Naive thymus-derived CD4-positive, alpha-beta T cell (primary cell): ENCODE measurements at regions of chr4 and their contacts with region 1.

Region 1: GRCh38 chr4:6250235-6250983 is 19.2 kb upstream of the WFS1 start:
- DNase-seq: peak in 7 of 9 donors; percentile 39 to 71 (median 60)
- ATAC-seq: peak; percentile 72
- H3K4me3 ChIP-seq: no peak overlapping the region
- H3K4me3 Mint-ChIP-seq: no peak overlapping the region
- H3K27ac ChIP-seq: no peak overlapping the region
- H3K27ac Mint-ChIP-seq: no peak overlapping the region
- H3K4me1 ChIP-seq: no peaks in the 10 kb centered on the region
- H3K4me1 Mint-ChIP-seq: peaks cover 0 to 6% (median 0%) of the 10 kb centered on the region in 7 donors
- H3K27me3 ChIP-seq: no peaks in the 10 kb centered on the region
- H3K27me3 Mint-ChIP-seq: peaks cover 38 to 52% (median 49%) of the 10 kb centered on the region in 5 donors

Region 2: GRCh38 chr4:5998333-5998936 is 252.0 kb before region 1 on chr4:
- CTCF ChIA-PET with region 1: no interaction called
- POLR2A ChIA-PET with region 1: no interaction called
- intact Hi-C with region 1: loop called in 1 of 2 experiments (anchors 5 kb)
- DNase-seq: peak in 6 of 9 donors; percentile 4 to 51 (median 11)
- ATAC-seq: peak; percentile 60
- H3K4me3 ChIP-seq: no peak overlapping the region
- H3K4me3 Mint-ChIP-seq: no peak overlapping the region
- H3K27ac ChIP-seq: no peak overlapping the region
- H3K27ac Mint-ChIP-seq: no peak overlapping the region
- H3K4me1 ChIP-seq: no peaks in the 10 kb centered on the region
- H3K4me1 Mint-ChIP-seq: peaks cover 0 to 3% (median 0%) of the 10 kb centered on the region in 7 donors
- H3K27me3 ChIP-seq: no peaks in the 10 kb centered on the region
- H3K27me3 Mint-ChIP-seq: peaks cover 0 to 35% (median 11%) of the 10 kb centered on the region in 5 donors

Region 3: DNA sequence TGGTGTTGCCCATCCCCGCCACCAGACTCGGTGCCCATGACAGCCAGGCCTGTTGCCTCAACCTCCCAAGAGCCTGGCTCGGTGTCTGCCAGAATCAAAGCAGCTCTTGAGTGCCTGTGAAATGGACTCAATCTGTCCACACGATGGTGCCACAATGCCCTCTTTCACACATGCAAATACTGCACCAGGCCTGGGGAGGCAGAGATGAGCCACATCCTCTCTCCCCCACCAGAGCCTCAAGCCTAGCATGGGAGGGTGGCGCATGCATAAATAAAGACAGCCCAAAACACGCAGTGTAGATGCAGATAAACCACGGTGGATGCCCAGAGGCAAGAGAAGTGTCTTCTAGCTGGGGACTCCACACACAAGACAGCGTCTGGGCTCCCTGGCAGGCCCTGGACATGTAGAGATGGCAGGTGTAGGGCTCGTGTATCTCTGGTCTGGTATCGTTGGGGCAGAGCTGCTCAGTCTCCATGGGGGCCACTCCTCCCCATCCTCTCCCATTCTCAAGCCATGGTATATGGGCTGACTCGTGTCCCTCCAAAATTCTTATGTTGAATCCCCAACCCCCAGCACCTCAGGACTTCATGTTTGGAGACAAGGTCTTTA is 115.7 kb before region 1 on chr4:
- CTCF ChIA-PET with region 1: no interaction called
- POLR2A ChIA-PET with region 1: no interaction called
- intact Hi-C with region 1: loop called in 1 of 2 experiments (anchors 2 kb)
- DNase-seq: peak in 1 of 9 donors; percentile 11
- ATAC-seq: peak; percentile 86
- H3K4me3 ChIP-seq: no peak overlapping the region
- H3K4me3 Mint-ChIP-seq: no peak overlapping the region
- H3K27ac ChIP-seq: no peak overlapping the region
- H3K27ac Mint-ChIP-seq: no peak overlapping the region
- H3K4me1 ChIP-seq: peaks cover 0 to 5% of the 10 kb centered on the region in 2 donors
- H3K4me1 Mint-ChIP-seq: peaks cover 0 to 11% (median 0%) of the 10 kb centered on the region in 7 donors
- H3K27me3 ChIP-seq: no peaks in the 10 kb centered on the region
- H3K27me3 Mint-ChIP-seq: peaks cover 0 to 9% (median 7%) of the 10 kb centered on the region in 5 donors

Region 4: DNA sequence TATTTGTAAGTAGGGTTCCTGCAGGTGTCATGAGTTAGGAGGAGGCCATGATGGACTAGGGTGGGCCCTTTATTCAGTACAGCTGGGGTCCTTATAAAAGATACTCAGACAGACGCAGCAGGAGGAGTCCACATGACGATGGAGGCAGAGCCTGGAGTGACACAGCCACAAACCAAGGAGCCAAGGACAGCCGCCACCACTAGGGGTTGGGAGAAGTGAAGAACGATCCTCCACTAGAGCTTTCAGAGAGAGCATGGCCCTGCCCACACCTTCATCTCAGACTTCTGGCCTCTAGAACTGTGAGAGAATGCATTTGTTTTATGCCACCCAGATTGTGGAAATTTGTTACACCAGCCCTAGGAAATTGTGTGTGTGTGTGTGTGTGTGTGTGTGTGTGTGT is 81.2 kb before region 1 on chr4:
- CTCF ChIA-PET with region 1: no interaction called
- POLR2A ChIA-PET with region 1: no interaction called
- intact Hi-C with region 1: no loop called
- DNase-seq: no peak
- ATAC-seq: no peak
- H3K4me3 ChIP-seq: no peak overlapping the region
- H3K4me3 Mint-ChIP-seq: no peak overlapping the region
- H3K27ac ChIP-seq: no peak overlapping the region
- H3K27ac Mint-ChIP-seq: no peak overlapping the region
- H3K4me1 ChIP-seq: peaks cover 0 to 14% of the 10 kb centered on the region in 2 donors
- H3K4me1 Mint-ChIP-seq: peaks cover 0 to 49% (median 0%) of the 10 kb centered on the region in 7 donors
- H3K27me3 ChIP-seq: no peaks in the 10 kb centered on the region
- H3K27me3 Mint-ChIP-seq: peaks cover 0 to 13% (median 0%) of the 10 kb centered on the region in 5 donors

Region 5: GRCh38 chr4:6264225-6264540 is 13.8 kb after region 1 on chr4:
- CTCF ChIA-PET with region 1: interaction called, 15 read pairs
- POLR2A ChIA-PET with region 1: no interaction called
- intact Hi-C with region 1: no loop called
- DNase-seq: no peak
- ATAC-seq: peak; percentile 40
- H3K4me3 ChIP-seq: no peak overlapping the region
- H3K4me3 Mint-ChIP-seq: no peak overlapping the region
- H3K27ac ChIP-seq: no peak overlapping the region
- H3K27ac Mint-ChIP-seq: no peak overlapping the region
- H3K4me1 ChIP-seq: peaks cover 0 to 6% of the 10 kb centered on the region in 2 donors
- H3K4me1 Mint-ChIP-seq: peaks cover 11 to 22% (median 15%) of the 10 kb centered on the region in 7 donors
- H3K27me3 ChIP-seq: no peaks in the 10 kb centered on the region
- H3K27me3 Mint-ChIP-seq: peaks cover 4 to 41% (median 13%) of the 10 kb centered on the region in 5 donors

Region 6: DNA sequence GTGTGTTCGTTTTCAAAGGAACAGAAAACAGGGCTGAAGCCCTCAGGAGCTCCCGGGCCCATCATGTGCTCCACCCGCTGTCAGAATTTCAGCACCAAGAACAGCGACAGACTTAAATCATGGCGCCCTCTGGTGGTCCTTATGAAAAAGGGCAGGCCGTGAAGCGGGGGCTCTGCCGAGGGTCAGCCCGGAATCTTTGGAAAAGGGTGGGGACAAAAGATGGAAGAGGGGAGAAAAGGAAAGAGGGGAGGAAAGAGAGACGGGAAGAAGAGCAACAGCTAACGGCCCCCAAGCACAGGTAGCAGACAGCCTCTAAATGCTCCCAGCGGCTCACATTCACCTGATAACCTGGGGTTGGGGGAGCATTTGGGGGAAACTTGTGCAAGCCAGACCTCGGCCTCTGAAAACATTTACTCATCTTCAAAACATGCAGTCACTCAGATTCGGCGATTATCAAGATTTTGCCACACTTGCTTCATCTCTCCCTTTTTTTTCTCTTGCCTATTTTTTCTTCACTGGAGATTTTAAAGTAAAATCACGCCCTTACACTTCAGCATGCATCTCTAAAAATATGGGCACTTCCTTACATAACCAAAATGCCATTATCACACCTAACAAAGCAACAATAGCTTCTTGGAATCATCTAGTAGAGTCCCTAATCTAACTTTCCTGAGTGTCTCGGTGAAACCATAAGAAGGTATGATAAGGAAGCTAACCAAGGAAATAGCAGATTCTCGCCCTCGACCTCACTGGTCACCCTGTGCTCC is 296.5 kb after region 1 on chr4:
- CTCF ChIA-PET with region 1: no interaction called
- POLR2A ChIA-PET with region 1: no interaction called
- intact Hi-C with region 1: loop called in 1 of 2 experiments (anchors 5 kb)
- DNase-seq: peak; percentile 13 to 57 (median 36)
- ATAC-seq: peak; percentile 82
- H3K4me3 ChIP-seq: no peak overlapping the region
- H3K4me3 Mint-ChIP-seq: no peak overlapping the region
- H3K27ac ChIP-seq: no peak overlapping the region
- H3K27ac Mint-ChIP-seq: peak overlapping the region in 1 of 9 donors; percentile 18
- H3K4me1 ChIP-seq: no peaks in the 10 kb centered on the region
- H3K4me1 Mint-ChIP-seq: peaks cover 0 to 4% (median 0%) of the 10 kb centered on the region in 7 donors
- H3K27me3 ChIP-seq: no peaks in the 10 kb centered on the region
- H3K27me3 Mint-ChIP-seq: peaks cover 4 to 77% (median 58%) of the 10 kb centered on the region in 5 donors